ENCODE measurements at regions of chr1 and their contacts with region 1.

Region 1: DNA sequence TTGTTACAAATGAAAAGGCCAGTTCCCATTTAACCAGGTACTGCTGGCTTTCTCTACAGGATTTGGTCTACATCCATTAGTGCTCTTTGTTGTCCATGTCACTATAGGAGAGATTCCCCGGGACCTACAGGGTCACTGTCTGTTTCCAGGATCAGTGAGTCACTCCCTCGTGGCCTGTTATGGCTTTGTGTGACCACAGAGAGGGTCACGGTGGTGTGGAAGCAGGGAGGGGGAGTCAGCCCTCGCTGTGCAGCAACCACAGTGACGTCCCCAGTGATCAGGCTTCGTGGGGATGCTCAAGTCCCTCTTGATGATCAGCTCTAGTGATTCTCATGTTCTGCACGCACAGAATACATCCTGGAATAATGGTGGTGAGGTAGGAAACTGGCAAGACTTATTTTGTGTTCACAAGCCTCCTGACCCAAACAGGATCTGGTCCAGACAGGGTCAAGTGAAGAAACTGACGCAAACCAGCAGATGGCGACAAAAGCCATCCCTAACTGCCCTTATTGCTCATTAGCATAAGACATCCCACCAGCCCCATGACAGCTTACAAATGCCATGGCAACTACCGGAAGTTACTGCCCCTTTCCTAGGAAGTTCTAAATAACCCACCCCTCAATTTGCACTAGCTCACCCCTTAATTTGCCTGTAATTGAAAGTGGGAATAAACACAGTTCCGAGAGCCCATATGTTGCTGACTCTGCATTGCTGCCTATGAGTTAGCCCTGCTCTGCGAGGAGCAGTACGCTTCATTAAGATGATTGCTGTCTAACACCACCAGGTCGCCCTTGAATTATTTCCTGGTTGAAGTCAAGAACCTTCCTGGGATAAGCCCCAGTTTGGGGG is 98.5 kb downstream of the DISC1 start:
- DNase-seq: peak; percentile 76
- ATAC-seq: peak; percentile 99
- H3K4me3 ChIP-seq: no peak overlapping the region
- H3K27ac ChIP-seq: no peak overlapping the region
- H3K4me1 ChIP-seq: no peaks in the 10 kb centered on the region
- H3K27me3 ChIP-seq: no peaks in the 10 kb centered on the region
- CTCF ChIP-seq: peak; percentile 59 to 88 (median 79)
- POLR2A ChIP-seq: no peak
- RAD21 ChIP-seq: peak; percentile 79

Region 2: GRCh38 chr1:231527586-231528171 is 197.4 kb before region 1 on chr1:
- CTCF ChIA-PET with region 1: no interaction called
- POLR2A ChIA-PET with region 1: no interaction called
- RAD21 ChIA-PET with region 1: no interaction called
- intact Hi-C with region 1: no loop called
- DNase-seq: no peak
- ATAC-seq: peak; percentile 20
- H3K4me3 ChIP-seq: peak overlapping the region; percentile 95 to 100
- H3K27ac ChIP-seq: peak overlapping the region; percentile 78
- H3K4me1 ChIP-seq: peaks cover 7 to 22% of the 10 kb centered on the region in 2 experiments; a peak in 3 of 4 replicates
- H3K27me3 ChIP-seq: no peaks in the 10 kb centered on the region
- CTCF ChIP-seq: no peak
- POLR2A ChIP-seq: no peak
- RAD21 ChIP-seq: no peak

Region 3: GRCh38 chr1:231931846-231932454 is 206.8 kb after region 1 on chr1:
- CTCF ChIA-PET with region 1: no interaction called
- POLR2A ChIA-PET with region 1: no interaction called
- RAD21 ChIA-PET with region 1: no interaction called
- intact Hi-C with region 1: loop called (anchors 2 kb)
- DNase-seq: peak; percentile 21
- ATAC-seq: peak; percentile 78
- H3K4me3 ChIP-seq: no peak overlapping the region
- H3K27ac ChIP-seq: no peak overlapping the region
- H3K4me1 ChIP-seq: no peaks in the 10 kb centered on the region
- H3K27me3 ChIP-seq: peaks cover 11% of the 10 kb centered on the region; the same call in 1 of the 2 replicates
- CTCF ChIP-seq: peak; percentile 27 to 91 (median 78); a peak in 4 of 6 replicates
- POLR2A ChIP-seq: no peak
- RAD21 ChIP-seq: peak; percentile 33; the same call in 1 of the 2 replicates